GM12878 (cell line): ENCODE measurements at regions of chr3 and their contacts with region 1.

Region 1: GRCh38 chr3:15098503-15099363 is at the start of gene RBSN:
- DNase-seq: peak; percentile 75
- ATAC-seq: peak; percentile 90
- H3K4me3 ChIP-seq: peak within 1 kb of the TSS; percentile 98
- H3K27ac ChIP-seq: peak within 1 kb of the TSS; percentile 69
- H3K4me1 ChIP-seq: peaks cover 8% of the 10 kb centered on the region
- H3K27me3 ChIP-seq: no peaks in the 10 kb centered on the region
- CTCF ChIP-seq: no peak
- EP300 ChIP-seq: peak in 1 of 2 experiments; percentile 14; a peak in 3 of 4 replicates
- POLR2A ChIP-seq: peak; percentile 93
- RAD21 ChIP-seq: no peak
- polyA plus RNA-seq, gene RBSN: 2.0 to 2.1 TPM

Region 2: DNA sequence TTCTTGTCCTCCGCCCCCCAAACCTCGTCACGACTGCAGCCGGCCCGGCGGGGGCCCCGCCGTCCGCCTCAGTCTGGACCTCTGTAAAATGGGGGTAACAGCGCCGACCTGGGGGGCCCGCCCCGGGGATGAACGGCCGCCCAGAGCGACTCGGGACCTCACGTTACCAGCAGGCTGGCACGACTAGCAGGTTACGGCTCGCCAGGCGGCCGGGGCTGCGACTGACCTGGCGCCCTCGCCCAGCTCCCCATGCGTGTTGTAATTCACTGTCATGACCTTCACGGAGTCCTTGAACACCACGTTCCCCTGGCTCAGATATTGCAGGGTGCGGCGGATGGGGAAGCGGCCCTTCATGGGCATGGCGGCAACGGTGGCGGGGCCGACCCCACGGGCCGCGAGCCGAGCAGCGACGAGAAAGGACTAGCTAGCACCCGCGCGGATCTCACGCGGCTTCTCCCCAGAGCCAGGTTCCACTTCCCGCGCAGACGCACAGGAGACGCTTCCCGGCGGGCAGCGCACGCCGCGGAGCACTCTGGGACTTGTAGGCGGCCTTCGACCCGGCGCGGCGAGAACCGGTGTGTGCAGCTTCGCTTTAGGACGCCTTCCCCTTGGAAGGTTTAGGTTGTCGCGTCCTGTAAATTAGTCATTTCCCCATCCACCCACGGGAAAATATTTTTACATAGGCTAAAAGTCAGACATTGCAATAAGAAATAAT is 33.7 kb before region 1 on chr3 and contains the start of gene MRPS25:
- CTCF ChIA-PET with region 1: interaction called, 3 read pairs
- POLR2A ChIA-PET with region 1: interaction called, 16 read pairs
- RAD21 ChIA-PET with region 1: no interaction called
- SMC1A ChIA-PET with region 1: interaction called, 5 read pairs
- in situ Hi-C with region 1: no loop called
- intact Hi-C with region 1: no loop called
- DNase-seq: peak; percentile 64
- ATAC-seq: peak; percentile 98
- H3K4me3 ChIP-seq: peak within 1 kb of the TSS; percentile 83
- H3K27ac ChIP-seq: peak within 1 kb of the TSS; percentile 89
- H3K4me1 ChIP-seq: peaks cover 13% of the 10 kb centered on the region
- H3K27me3 ChIP-seq: no peaks in the 10 kb centered on the region
- CTCF ChIP-seq: no peak
- EP300 ChIP-seq: no peak
- POLR2A ChIP-seq: peak; percentile 100
- RAD21 ChIP-seq: no peak
- polyA plus RNA-seq, gene MRPS25: 17.0 to 43.6 TPM